CD4-positive, alpha-beta T cell (primary cell): ENCODE measurements at regions of chr16 and their contacts with region 1.

Region 1: DNA sequence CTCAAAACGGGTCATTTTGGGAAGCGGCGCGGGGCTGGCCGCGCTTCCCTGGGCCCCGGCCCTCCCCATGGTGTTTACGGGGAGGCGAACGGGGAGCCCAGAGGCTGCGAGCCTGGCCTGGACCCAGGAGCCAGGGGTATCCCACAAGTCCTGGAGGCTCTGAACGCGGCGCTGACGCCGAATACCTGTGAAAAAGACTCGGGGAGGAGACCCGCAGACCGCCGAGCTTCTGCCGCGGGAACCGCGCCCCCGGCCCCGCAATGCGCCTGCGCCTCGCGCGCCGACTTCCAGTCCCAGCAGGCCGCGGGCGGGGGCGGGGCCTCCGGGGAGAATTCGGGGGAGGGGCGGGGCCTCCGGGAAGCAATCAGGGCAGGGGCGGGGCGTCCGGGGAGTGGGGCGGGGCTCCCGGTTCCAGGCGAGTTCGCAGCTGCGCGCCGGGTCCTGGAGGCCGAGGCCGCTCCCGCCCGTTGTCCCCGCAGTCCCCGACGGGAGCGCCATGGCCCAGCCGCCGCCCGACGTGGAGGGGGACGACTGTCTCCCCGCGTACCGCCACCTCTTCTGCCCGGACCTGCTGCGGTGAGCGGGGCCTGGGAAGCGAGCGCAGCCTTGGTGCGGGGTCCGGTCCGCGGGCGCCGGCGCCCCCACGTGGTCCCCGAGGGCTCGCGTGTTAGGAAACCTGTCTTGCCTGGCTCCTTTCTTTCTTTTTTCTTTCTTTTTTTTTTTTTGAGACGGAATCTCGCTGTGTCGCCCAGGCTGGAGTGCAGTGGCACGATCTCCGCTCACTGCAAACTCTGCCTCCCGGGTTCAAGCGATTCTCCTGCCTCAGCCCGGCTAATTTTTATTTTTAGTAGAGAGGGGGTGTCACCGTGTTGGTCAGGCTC is at the start of gene DECR2:
- DNase-seq: peak; percentile 94 to 100 (median 99)
- ATAC-seq: peak; percentile 84
- H3K4me3 ChIP-seq: peak within 1 kb of the TSS; percentile 92
- H3K4me3 Mint-ChIP-seq: peak within 1 kb of the TSS; percentile 98
- H3K27ac ChIP-seq: peak within 1 kb of the TSS; percentile 67 to 81
- H3K27ac Mint-ChIP-seq: peak within 1 kb of the TSS; percentile 97
- H3K4me1 ChIP-seq: peaks cover 21% of the 10 kb centered on the region
- H3K4me1 Mint-ChIP-seq: peaks cover 18% of the 10 kb centered on the region
- H3K27me3 ChIP-seq: no peaks in the 10 kb centered on the region
- H3K27me3 Mint-ChIP-seq: no peaks in the 10 kb centered on the region
- CTCF ChIP-seq: peak; percentile 68
- total RNA-seq, gene DECR2: 5.7 to 7.0 TPM

Region 2: DNA sequence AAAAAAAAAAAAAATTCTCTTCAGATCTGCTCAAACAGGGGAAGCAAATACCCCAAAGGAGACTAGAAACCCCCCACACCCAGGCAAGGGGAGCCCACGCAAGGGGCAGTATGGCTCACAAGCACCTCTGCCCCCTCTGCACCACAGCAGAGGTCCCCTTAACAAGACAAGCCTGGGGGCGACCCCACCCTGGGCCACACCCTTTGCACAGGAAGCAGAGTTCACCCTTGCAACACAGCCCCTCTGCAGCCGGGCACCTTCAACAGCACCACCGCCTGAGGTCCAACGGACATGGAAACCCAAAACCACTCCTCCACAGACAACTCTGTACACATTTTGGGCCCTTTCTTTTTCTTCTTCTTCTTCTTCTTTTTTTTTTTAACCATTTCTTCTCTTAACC is 62.0 kb before region 1 on chr16:
- CTCF ChIA-PET with region 1: no interaction called
- POLR2A ChIA-PET with region 1: no interaction called
- intact Hi-C with region 1: no loop called
- DNase-seq: peak in 1 of 14 experiments; percentile 36
- ATAC-seq: peak; percentile 66
- H3K4me3 ChIP-seq: no peak overlapping the region
- H3K4me3 Mint-ChIP-seq: peak overlapping the region; percentile 81
- H3K27ac ChIP-seq: no peak overlapping the region
- H3K27ac Mint-ChIP-seq: peak overlapping the region; percentile 71
- H3K4me1 ChIP-seq: peaks cover 74% of the 10 kb centered on the region
- H3K4me1 Mint-ChIP-seq: peaks cover 55% of the 10 kb centered on the region
- H3K27me3 ChIP-seq: no peaks in the 10 kb centered on the region
- H3K27me3 Mint-ChIP-seq: no peaks in the 10 kb centered on the region
- CTCF ChIP-seq: no peak

Region 3: GRCh38 chr16:370443-370842 is 31.3 kb before region 1 on chr16 and contains the start of gene MRPL28:
- CTCF ChIA-PET with region 1: interaction called, 8 read pairs
- POLR2A ChIA-PET with region 1: interaction called, 18 read pairs
- intact Hi-C with region 1: loop called in 1 of 2 experiments (anchors 1 kb)
- DNase-seq: peak; percentile 85 to 96 (median 92)
- ATAC-seq: peak; percentile 100
- H3K4me3 ChIP-seq: peak within 1 kb of the TSS; percentile 30
- H3K4me3 Mint-ChIP-seq: peak within 1 kb of the TSS; percentile 95
- H3K27ac ChIP-seq: peak within 1 kb of the TSS; percentile 23 to 60
- H3K27ac Mint-ChIP-seq: peak within 1 kb of the TSS; percentile 83
- H3K4me1 ChIP-seq: peaks cover 22% of the 10 kb centered on the region
- H3K4me1 Mint-ChIP-seq: peaks cover 17% of the 10 kb centered on the region
- H3K27me3 ChIP-seq: no peaks in the 10 kb centered on the region
- H3K27me3 Mint-ChIP-seq: no peaks in the 10 kb centered on the region
- CTCF ChIP-seq: no peak
- total RNA-seq, gene MRPL28: 19.6 to 19.7 TPM

Region 4: GRCh38 chr16:425082-425718 is 23.5 kb after region 1 on chr16 and contains the start of gene RAB11FIP3:
- CTCF ChIA-PET with region 1: interaction called, 5 read pairs
- POLR2A ChIA-PET with region 1: interaction called, 16 read pairs
- intact Hi-C with region 1: loop called (anchors 1 to 2 kb)
- DNase-seq: peak; percentile 65 to 91 (median 84)
- ATAC-seq: peak; percentile 89
- H3K4me3 ChIP-seq: peak within 1 kb of the TSS; percentile 72
- H3K4me3 Mint-ChIP-seq: peak within 1 kb of the TSS; percentile 95
- H3K27ac ChIP-seq: peak within 1 kb of the TSS; percentile 70 to 84
- H3K27ac Mint-ChIP-seq: peak within 1 kb of the TSS; percentile 93
- H3K4me1 ChIP-seq: peaks cover 34% of the 10 kb centered on the region
- H3K4me1 Mint-ChIP-seq: peaks cover 38% of the 10 kb centered on the region
- H3K27me3 ChIP-seq: no peaks in the 10 kb centered on the region
- H3K27me3 Mint-ChIP-seq: no peaks in the 10 kb centered on the region
- CTCF ChIP-seq: peak; percentile 21
- total RNA-seq, gene RAB11FIP3: 28.4 to 29.0 TPM

Region 5: DNA sequence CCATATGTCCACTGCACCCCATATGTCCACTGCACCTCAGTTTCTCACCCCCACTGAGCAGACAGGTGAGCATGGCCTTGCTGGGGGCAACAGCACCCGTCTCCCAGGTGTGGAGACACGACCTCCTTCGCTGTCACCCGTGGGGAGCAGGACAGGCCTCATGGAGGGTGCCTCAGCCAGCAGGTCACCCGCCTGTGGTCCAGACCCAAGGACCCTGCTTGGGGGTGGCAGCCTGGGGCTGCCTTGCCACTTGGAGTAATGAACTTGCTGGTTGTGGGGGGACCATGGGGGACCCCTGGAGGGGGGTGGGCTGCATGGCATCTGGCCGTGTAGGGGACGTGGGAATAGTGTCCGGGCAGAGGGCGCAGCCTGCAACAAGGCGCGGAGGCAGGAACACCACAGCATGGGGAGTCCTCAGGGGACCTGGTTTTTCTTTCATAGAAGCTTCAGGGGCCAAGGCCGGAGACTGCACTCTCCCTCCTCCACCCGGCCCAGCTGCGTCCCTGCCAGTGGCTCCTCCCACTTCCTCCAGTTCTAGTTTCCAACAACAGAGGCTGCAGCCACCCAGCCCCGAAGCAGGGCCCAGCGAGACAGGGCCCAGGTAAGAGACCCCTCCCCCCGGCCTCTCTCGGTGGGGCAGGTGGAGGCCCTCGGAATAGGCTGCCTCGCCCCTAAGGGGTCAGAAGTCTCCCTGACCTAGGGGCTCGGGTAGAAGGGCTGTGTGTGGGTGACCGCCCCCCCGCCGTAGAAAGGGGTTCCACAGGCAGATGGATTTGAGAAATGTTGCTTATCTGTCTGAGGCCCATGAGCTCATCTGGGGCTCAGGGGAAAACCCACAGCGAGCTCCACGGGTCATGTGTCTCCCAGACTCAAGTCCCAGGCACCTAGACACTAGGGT is 165.0 kb after region 1 on chr16 and contains the start of gene NHLRC4:
- CTCF ChIA-PET with region 1: no interaction called
- POLR2A ChIA-PET with region 1: no interaction called
- intact Hi-C with region 1: no loop called
- DNase-seq: peak in 13 of 14 experiments; percentile 27 to 75 (median 54)
- ATAC-seq: peak; percentile 43
- H3K4me3 ChIP-seq: peak within 1 kb of the TSS; percentile 56
- H3K4me3 Mint-ChIP-seq: peak within 1 kb of the TSS; percentile 84
- H3K27ac ChIP-seq: peak within 1 kb of the TSS; percentile 26 to 72
- H3K27ac Mint-ChIP-seq: peak within 1 kb of the TSS; percentile 84
- H3K4me1 ChIP-seq: peaks cover 55% of the 10 kb centered on the region
- H3K4me1 Mint-ChIP-seq: peaks cover 33% of the 10 kb centered on the region
- H3K27me3 ChIP-seq: no peaks in the 10 kb centered on the region
- H3K27me3 Mint-ChIP-seq: no peaks in the 10 kb centered on the region
- CTCF ChIP-seq: no peak
- total RNA-seq, gene NHLRC4: 0.45 to 0.55 TPM

Region 6: GRCh38 chr16:867461-868385 is 466.0 kb after region 1 on chr16:
- CTCF ChIA-PET with region 1: no interaction called
- POLR2A ChIA-PET with region 1: no interaction called
- intact Hi-C with region 1: no loop called
- DNase-seq: no peak
- ATAC-seq: no peak
- H3K4me3 ChIP-seq: no peak overlapping the region
- H3K4me3 Mint-ChIP-seq: no peak overlapping the region
- H3K27ac ChIP-seq: no peak overlapping the region
- H3K27ac Mint-ChIP-seq: no peak overlapping the region
- H3K4me1 ChIP-seq: no peaks in the 10 kb centered on the region
- H3K4me1 Mint-ChIP-seq: no peaks in the 10 kb centered on the region
- H3K27me3 ChIP-seq: no peaks in the 10 kb centered on the region
- H3K27me3 Mint-ChIP-seq: no peaks in the 10 kb centered on the region
- CTCF ChIP-seq: no peak